ENCODE measurements at regions of chr10 and their contacts with region 1.

Region 1: DNA sequence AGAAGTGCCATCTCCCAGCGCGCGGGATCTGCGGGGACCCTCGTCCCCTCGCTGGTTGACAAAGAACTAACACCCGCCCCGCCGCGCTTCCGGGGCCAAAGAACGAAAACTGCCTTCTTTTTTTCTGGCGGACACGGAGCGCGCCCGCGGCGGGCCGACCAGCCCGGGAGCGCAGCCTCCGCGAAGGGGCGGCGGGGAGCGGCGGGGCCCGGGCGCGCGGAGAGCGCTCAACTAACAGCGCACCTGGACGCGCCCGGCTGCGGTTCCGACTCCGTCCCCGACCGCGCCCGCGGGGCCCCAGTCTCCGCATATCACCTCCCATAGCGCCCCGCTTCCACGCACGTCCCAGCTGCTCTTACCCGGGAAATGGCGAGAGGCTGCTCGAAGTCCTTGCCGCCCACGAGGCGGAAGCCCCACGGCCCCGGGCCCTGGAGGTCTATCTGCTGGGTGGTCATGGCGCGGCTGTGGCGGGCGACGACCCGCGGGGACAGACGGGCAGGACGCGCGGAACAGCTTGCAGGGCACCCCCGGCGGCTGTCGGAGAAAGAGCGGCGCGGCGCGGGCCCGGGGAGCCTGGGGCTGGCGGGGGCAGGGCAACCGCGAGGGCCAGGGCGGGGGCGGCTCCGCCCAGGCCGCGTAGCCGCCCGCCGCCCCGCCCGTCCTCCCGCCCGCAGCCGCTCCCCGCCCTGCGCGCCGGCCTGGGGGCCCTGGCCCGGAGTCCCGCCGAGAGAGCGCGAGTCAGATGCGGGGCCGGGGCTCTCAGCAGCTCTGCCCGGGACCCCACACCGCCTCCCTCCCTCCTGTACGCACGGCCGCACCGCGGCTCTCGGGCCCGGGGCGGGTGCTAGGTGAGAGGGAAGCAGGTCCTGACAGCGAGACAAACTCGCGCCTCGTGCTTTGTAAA is at the start of gene PDLIM1:
- DNase-seq: peak; percentile 81
- ATAC-seq: peak; percentile 73
- H3K4me3 Mint-ChIP-seq: peak within 1 kb of the TSS; percentile 90
- H3K27ac Mint-ChIP-seq: peak within 1 kb of the TSS; percentile 95
- H3K4me1 Mint-ChIP-seq: peaks cover 87% of the 10 kb centered on the region
- H3K27me3 Mint-ChIP-seq: no peaks in the 10 kb centered on the region
- CTCF ChIP-seq: no peak
- total RNA-seq, gene PDLIM1: 141 and 149 TPM in 2 replicates

Region 2: DNA sequence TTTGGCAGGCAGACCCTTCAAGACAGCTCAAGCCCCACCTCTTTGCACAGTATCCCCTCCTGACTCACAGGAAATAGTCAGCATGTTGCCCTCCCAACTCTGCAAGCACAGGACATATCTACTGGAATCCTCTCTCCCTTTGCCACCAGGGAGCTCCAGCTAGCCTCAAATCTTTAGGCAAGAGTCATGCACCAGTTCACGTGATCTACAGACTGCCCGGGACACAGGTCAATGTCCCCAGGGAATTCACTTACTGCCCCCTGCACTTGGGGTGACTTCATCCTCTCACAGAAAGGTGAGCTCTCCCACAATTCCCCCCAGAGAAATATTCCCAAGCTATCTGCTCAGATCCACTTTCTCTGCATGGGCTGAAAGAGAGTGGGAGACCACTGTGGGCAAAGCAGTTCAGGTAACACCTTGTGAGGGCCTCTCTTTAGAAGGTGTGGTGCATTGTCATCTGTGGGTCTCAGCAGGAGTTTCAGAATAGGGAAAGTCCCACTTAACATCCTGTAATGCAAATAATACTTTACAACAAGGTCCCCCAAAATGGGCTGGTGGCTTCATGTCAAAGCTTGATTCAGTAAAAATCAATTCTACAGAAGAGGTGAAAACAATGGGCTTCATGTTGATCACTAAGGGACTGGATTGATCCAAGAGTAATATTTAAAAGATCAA is 1057.9 kb before region 1 on chr10:
- CTCF ChIA-PET with region 1: no interaction called
- POLR2A ChIA-PET with region 1: no interaction called
- intact Hi-C with region 1: no loop called
- DNase-seq: no peak
- ATAC-seq: no peak
- H3K4me3 Mint-ChIP-seq: no peak overlapping the region
- H3K27ac Mint-ChIP-seq: no peak overlapping the region
- H3K4me1 Mint-ChIP-seq: no peaks in the 10 kb centered on the region
- H3K27me3 Mint-ChIP-seq: peaks cover 9% of the 10 kb centered on the region
- CTCF ChIP-seq: no peak

Region 3: DNA sequence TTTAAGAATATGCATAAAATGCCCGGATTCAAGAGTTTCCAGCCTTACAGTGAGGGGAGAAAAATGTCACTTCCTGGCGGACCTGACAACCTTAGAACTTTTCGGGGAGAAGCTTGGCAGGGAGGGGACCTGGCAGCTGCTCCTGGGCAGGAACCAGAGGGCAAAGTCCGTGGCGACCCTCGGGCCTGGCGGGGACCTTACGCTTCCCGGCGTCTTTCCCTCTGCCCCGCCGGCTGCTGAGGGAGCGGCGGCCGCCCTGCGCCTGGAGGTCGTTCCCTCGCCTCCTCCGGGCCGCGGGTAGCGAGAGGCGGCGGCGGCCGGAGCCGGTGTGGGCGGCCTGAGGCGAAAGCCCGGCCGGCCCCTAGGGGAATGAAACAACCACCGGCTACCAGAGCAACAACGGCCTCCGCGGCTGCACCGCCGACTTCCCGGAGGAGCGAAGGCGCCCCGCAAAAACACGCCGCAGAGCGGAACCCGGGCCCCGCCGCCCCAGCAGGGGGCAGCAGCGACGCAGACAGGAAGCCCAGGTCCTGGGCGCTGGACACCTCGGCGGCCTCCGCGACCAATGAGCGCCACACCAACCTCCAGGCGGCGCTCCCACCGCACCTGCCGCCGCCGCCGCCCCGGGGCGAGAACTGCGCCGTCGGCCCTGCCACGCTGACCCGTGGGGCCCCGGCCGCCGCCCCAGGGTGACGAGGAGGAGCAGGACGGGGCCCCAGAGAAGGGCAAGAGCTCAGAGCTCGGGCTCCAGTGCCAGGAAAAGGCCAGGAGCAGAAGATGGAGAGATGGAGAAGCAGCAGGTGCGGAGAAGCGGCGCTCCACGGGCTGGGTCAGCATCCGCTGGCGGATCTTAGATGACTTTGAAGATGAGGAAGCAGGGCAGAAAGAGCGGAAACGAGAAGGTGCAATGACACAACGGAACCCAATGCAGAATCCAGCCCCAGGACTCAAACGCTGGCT is 107.2 kb before region 1 on chr10:
- CTCF ChIA-PET with region 1: no interaction called
- POLR2A ChIA-PET with region 1: no interaction called
- intact Hi-C with region 1: loop called (anchors 2 kb)
- DNase-seq: peak; percentile 87
- ATAC-seq: peak; percentile 96
- H3K4me3 Mint-ChIP-seq: peak overlapping the region; percentile 83
- H3K27ac Mint-ChIP-seq: peak overlapping the region; percentile 84
- H3K4me1 Mint-ChIP-seq: peaks cover 7% of the 10 kb centered on the region
- H3K27me3 Mint-ChIP-seq: no peaks in the 10 kb centered on the region
- CTCF ChIP-seq: peak; percentile 68

Region 4: DNA sequence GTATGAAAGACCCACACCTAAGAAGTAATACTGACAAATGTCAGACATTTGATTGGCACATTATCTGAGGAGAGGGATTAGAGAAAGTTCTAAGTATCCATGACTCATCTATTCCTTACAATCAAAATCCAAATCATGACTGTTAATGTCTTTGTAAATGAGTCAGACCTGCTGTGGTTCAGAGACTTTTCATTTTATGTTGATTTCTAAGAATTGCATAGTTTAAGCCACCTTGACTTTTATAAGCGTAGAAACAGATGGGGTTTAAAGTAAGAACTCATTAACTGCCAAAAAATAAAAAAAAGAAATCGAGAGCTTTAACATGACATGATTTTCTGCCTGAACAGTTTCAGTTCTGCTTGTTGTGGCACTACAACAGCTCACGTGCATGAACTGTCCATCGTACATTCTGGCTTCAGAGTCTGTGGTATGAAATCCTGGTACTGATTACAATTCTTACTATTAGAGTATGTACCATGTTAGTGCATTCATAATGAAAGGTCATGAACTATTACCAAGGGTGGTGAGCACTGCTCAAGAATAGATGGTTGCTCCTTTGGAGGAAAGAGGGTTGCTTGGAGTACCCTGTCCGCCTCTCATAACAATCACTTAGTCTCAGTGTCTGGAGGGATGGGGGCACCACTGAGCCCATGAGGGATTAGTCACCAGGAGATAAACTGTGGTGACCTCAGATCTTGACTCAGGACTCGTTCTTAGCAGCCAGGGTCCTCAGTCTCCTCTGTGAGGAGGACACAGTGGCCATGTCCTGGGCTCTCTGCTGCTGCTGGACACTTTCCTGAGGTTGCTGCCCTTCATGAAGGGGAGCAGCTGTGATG is 54.4 kb before region 1 on chr10:
- CTCF ChIA-PET with region 1: no interaction called
- POLR2A ChIA-PET with region 1: interaction called, 3 read pairs
- intact Hi-C with region 1: loop called (anchors 1 kb)
- DNase-seq: no peak
- ATAC-seq: peak; percentile 81
- H3K4me3 Mint-ChIP-seq: peak overlapping the region; percentile 38
- H3K27ac Mint-ChIP-seq: peak overlapping the region; percentile 81
- H3K4me1 Mint-ChIP-seq: peaks cover 24% of the 10 kb centered on the region
- H3K27me3 Mint-ChIP-seq: no peaks in the 10 kb centered on the region
- CTCF ChIP-seq: no peak

Region 5: GRCh38 chr10:95279042-95279820 is 11.5 kb before region 1 on chr10:
- CTCF ChIA-PET with region 1: no interaction called
- POLR2A ChIA-PET with region 1: interaction called, 10 read pairs
- intact Hi-C with region 1: loop called (anchors 1 kb)
- DNase-seq: no peak
- ATAC-seq: no peak
- H3K4me3 Mint-ChIP-seq: no peak overlapping the region
- H3K27ac Mint-ChIP-seq: no peak overlapping the region
- H3K4me1 Mint-ChIP-seq: peaks cover 72% of the 10 kb centered on the region
- H3K27me3 Mint-ChIP-seq: no peaks in the 10 kb centered on the region
- CTCF ChIP-seq: no peak

Region 6: DNA sequence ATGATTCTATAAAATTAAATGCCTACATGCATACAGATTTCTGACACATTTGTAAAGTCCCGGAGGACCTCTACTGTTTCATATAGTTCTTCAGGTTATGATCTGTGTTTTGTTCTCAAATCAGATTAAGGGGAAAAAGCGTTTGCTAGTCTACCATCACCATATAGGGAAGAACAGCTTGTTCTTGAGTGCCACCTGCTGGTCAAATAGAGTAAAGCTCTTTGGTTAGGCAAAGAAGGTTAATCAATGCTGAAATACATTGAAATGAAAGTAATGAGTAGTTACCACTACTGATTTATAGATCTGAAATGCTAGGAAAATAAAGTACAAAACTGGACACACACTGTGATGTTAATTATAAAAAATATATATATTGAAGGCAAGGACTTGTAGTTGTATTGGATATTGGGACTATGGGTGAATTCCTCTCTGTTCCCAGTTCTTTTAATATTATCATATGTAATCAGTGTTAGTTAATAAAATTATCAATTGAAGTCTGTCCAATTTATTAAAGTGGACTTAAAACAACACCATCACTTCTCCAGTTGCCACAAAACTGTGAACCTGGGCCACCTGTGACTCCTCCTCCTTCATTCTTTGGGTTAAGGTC is 72.7 kb after region 1 on chr10:
- CTCF ChIA-PET with region 1: interaction called, 14 read pairs
- POLR2A ChIA-PET with region 1: interaction called, 12 read pairs
- intact Hi-C with region 1: loop called (anchors 1 kb)
- DNase-seq: no peak
- ATAC-seq: peak; percentile 85
- H3K4me3 Mint-ChIP-seq: no peak overlapping the region
- H3K27ac Mint-ChIP-seq: no peak overlapping the region
- H3K4me1 Mint-ChIP-seq: peaks cover 2% of the 10 kb centered on the region
- H3K27me3 Mint-ChIP-seq: no peaks in the 10 kb centered on the region
- CTCF ChIP-seq: no peak

Region 7: GRCh38 chr10:96043033-96043932 is 752.6 kb after region 1 on chr10 and contains the start of gene CCNJ:
- CTCF ChIA-PET with region 1: no interaction called
- POLR2A ChIA-PET with region 1: no interaction called
- intact Hi-C with region 1: loop called (anchors 10 kb)
- DNase-seq: peak; percentile 83
- ATAC-seq: peak; percentile 88
- H3K4me3 Mint-ChIP-seq: peak within 1 kb of the TSS; percentile 93
- H3K27ac Mint-ChIP-seq: peak within 1 kb of the TSS; percentile 80
- H3K4me1 Mint-ChIP-seq: peaks cover 41% of the 10 kb centered on the region
- H3K27me3 Mint-ChIP-seq: no peaks in the 10 kb centered on the region
- CTCF ChIP-seq: no peak
- total RNA-seq, gene CCNJ: 9.8 and 10.2 TPM in 2 replicates

Measured in activated B cell treated with CpG ODN at 0.5 μM for 24 hours (primary cell).